HepG2 (cell line): ENCODE measurements at regions of chr3 and their contacts with region 1.

Region 1: GRCh38 chr3:41893977-41894376 is 67.9 kb downstream of the ULK4 start:
- DNase-seq: peak; percentile 30
- ATAC-seq: no peak
- H3K4me3 ChIP-seq: no peak overlapping the region
- H3K27ac ChIP-seq: no peak overlapping the region
- H3K4me1 ChIP-seq: peaks cover 12% of the 10 kb centered on the region
- H3K27me3 ChIP-seq: no peaks in the 10 kb centered on the region
- CTCF ChIP-seq: peak; percentile 62
- EP300 ChIP-seq: no peak
- POLR2A ChIP-seq: no peak
- RAD21 ChIP-seq: 0 out of 2 replicates have a peak, but pooled peaks have one; percentile 25

Region 2: DNA sequence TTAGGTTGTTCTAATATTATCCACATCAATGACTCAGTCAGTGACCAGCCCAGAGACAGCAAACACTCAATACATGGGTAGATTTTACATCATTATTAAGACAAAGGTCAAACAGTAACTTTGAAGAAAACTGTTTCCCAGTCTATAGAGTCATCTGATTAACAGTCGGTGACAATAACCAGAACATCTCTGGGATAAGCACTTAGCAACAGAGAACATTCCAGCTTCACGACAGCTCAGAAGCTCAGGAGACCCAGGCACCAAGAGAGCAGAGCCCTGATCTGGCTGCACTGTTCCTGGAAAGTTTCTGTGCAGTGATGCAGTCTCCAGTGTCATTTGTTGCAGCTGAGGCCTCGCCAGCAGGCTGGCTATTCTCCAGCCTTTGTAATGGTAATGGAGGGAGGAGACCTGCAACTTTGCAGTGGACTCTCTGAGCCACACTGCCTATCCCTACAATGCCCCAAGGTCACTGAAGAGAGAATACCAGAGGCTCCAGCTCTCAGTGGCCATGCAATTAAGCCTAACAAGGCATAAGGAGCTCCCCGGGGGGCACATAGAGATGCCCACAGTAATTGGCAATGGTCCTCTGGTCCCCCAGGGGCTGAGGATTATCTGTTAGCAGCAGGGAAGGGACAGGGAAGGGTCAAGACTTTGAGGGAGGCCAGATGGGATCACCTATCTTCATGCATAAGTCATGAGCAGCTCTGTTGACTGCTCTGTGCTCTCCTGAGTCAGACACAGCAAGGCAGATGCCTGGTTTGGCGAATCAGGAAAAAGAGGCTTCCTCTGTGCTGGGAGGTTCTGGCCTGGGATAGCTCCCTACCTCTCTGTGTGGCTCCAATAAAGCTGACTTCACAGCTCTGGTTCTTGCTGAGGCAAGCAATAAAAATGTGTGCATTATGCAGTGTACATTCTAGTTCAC is 531.1 kb before region 1 on chr3:
- CTCF ChIA-PET with region 1: no interaction called
- POLR2A ChIA-PET with region 1: no interaction called
- in situ Hi-C with region 1: no loop called
- intact Hi-C with region 1: no loop called
- DNase-seq: peak; percentile 18
- ATAC-seq: peak; percentile 65
- H3K4me3 ChIP-seq: no peak overlapping the region
- H3K27ac ChIP-seq: no peak overlapping the region
- H3K4me1 ChIP-seq: peaks cover 44% of the 10 kb centered on the region
- H3K27me3 ChIP-seq: no peaks in the 10 kb centered on the region; a peak in 1 of 5 replicates
- CTCF ChIP-seq: no peak
- EP300 ChIP-seq: no peak
- POLR2A ChIP-seq: no peak
- RAD21 ChIP-seq: no peak

Region 3: GRCh38 chr3:41863024-41863423 is 31.0 kb before region 1 on chr3:
- CTCF ChIA-PET with region 1: no interaction called
- POLR2A ChIA-PET with region 1: no interaction called
- in situ Hi-C with region 1: no loop called
- intact Hi-C with region 1: no loop called
- DNase-seq: peak; percentile 15
- ATAC-seq: peak; percentile 90
- H3K4me3 ChIP-seq: no peak overlapping the region
- H3K27ac ChIP-seq: no peak overlapping the region
- H3K4me1 ChIP-seq: no peaks in the 10 kb centered on the region
- H3K27me3 ChIP-seq: no peaks in the 10 kb centered on the region
- CTCF ChIP-seq: peak; percentile 51
- EP300 ChIP-seq: no peak
- POLR2A ChIP-seq: no peak
- RAD21 ChIP-seq: no peak

Region 4: DNA sequence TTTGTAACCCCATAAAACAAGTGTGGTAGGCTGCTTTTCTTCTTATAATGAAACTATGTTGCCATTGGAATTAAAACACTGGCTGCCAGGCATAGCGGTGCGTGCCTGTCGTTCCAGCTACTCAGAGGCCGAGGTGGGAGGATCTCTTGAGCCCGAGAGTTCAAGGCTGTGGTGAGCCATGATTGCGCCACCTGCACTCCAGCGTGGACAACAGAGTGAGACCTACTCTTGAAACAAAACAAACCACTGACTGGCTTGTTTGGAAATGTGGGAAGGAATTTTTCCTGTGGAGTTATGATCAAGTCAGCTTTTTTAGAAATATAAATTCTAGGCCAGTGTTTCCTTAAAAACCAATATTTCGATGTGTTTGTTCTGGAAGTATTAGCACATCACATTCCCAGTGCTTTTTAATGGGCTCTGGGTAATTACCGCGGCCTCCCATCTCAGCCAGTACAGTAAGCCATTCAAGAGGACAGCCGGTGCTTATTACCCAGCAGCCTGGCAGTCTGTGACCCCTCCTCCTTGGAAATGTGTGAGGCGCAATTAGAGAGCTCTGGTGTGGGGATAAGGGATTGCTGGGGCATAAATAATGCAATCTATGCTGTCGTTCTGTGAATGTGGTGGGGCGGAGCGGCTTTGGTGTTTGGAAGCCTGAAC is 138.8 kb after region 1 on chr3:
- CTCF ChIA-PET with region 1: no interaction called
- POLR2A ChIA-PET with region 1: no interaction called
- in situ Hi-C with region 1: no loop called
- intact Hi-C with region 1: no loop called
- DNase-seq: peak; percentile 95
- ATAC-seq: peak; percentile 95
- H3K4me3 ChIP-seq: peak overlapping the region; percentile 26 to 53 (median 43)
- H3K27ac ChIP-seq: peak overlapping the region; percentile 85
- H3K4me1 ChIP-seq: peaks cover 58% of the 10 kb centered on the region
- H3K27me3 ChIP-seq: no peaks in the 10 kb centered on the region
- CTCF ChIP-seq: peak; percentile 46
- EP300 ChIP-seq: peak; percentile 76 to 88; a peak in 3 of 4 replicates
- POLR2A ChIP-seq: no peak
- RAD21 ChIP-seq: peak; percentile 46; the same call in 1 of the 2 replicates

Region 5: DNA sequence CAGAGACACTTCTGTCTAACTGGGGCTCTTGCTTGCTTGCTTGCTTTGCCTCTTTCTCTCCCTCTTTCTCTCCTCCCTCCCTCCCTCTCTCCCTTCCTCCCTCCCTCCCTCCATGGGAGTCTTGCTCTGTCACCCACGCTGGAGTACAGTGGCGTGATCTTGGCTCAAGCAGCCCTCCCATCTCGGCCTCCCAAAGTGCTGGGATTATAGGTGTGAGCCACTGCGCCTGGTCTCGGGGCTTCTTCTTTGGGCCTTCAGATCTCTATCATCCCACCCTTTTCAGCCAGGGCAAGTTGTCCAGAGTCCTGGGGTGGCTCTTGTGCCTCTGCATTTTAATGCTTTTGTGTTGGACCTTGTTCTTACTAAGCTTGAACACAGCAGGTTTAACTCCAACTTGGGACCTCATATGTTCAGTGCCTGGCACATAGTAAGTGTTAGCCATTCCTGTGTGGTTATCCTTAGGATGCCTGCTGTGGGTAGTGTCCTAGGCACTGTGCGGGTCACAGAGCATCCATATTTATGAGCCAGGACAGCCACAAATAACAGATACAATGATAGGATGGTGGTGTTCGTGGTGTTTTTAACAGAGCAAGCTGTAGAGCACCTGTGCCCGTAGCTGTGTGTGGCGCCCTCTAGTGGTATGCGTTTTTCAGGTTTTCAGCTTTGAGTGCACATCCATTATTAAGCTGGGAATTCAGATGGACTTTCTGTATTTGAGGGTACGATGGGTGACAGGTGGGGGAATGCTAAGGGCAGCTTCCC is 296.9 kb after region 1 on chr3:
- CTCF ChIA-PET with region 1: interaction called, 8 read pairs
- POLR2A ChIA-PET with region 1: no interaction called
- in situ Hi-C with region 1: loop called (anchors 5 kb)
- intact Hi-C with region 1: loop called (anchors 5 kb)
- DNase-seq: peak; percentile 55
- ATAC-seq: peak; percentile 90
- H3K4me3 ChIP-seq: no peak overlapping the region
- H3K27ac ChIP-seq: no peak overlapping the region
- H3K4me1 ChIP-seq: no peaks in the 10 kb centered on the region
- H3K27me3 ChIP-seq: no peaks in the 10 kb centered on the region
- CTCF ChIP-seq: peak; percentile 90
- EP300 ChIP-seq: no peak
- POLR2A ChIP-seq: no peak
- RAD21 ChIP-seq: peak; percentile 88

Region 6: DNA sequence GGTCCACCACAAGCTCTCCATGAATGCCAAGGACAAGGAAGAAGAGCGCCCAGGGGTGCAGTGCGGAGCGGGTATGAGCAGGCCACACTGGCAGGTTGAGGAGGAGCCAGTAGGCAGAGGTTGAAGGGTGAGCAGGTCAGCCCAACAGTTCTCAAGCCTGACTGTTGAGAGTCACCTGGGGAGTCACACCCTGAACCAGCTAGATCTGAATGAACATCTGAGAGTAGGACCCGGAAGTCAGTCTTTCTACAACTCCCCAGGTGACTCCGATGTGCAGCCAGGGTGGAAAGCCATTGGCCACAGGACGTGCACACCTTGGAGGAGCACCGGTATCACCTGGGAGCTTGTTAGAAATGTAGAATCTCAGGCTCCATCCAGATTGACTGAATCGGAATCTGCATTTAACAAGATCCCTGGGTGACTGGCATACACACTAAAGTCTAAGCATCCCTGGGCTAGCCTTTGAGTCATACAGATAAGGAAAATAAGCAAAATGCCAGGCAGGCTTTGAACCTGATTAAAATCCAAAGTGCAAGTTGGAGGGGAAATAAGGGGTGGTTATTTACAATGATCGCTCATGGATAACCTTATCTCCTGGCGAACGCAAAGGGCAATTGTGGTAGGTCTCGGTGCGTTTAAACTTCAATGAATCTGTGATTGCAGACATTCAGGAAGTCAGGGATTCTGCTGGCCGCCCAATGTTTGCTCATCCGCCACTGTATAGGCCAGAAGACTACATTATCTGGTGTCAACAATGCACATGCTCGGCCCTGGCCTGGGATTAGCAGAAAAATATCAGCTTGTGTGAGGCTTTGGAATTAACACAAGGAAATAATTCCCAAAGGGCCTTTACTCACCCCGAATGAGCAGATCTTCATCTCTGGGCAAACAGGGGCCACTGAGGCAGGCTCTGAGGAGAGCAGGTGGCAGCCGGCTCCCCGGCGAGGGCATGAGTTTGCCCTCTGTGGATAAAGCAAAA is 528.1 kb after region 1 on chr3:
- CTCF ChIA-PET with region 1: no interaction called
- POLR2A ChIA-PET with region 1: no interaction called
- in situ Hi-C with region 1: no loop called
- intact Hi-C with region 1: loop called (anchors 1 kb)
- DNase-seq: peak; percentile 99
- ATAC-seq: peak; percentile 98
- H3K4me3 ChIP-seq: peak overlapping the region in 2 of 3 experiments; percentile 33 to 43; a peak in 5 of 6 replicates
- H3K27ac ChIP-seq: peak overlapping the region; percentile 84
- H3K4me1 ChIP-seq: peaks cover 53% of the 10 kb centered on the region
- H3K27me3 ChIP-seq: no peaks in the 10 kb centered on the region
- CTCF ChIP-seq: no peak
- EP300 ChIP-seq: peak; percentile 82 to 96; a peak in 3 of 4 replicates
- POLR2A ChIP-seq: no peak
- RAD21 ChIP-seq: no peak; the same call in 1 of the 2 replicates